Activated CD8-positive, alpha-beta T cell treated with anti-CD3 and anti-CD28 coated beads, Interleukin-2, amount 10 ng/mL, durations not matched to agents 7 days and 5 days (primary cell): ENCODE measurements at regions of chr2 and their contacts with region 1.

Region 1: GRCh38 chr2:109031476-109032228 is 42.6 kb upstream of the EDAR start:
- DNase-seq: peak; percentile 84
- ATAC-seq: peak; percentile 82
- H3K4me3 Mint-ChIP-seq: peak overlapping the region; percentile 83
- H3K27ac Mint-ChIP-seq: peak overlapping the region; percentile 95
- H3K4me1 Mint-ChIP-seq: peaks cover 29% of the 10 kb centered on the region
- H3K27me3 Mint-ChIP-seq: no peaks in the 10 kb centered on the region

Region 2: GRCh38 chr2:108858894-108859293 is 172.8 kb before region 1 on chr2:
- CTCF ChIA-PET with region 1: no interaction called
- POLR2A ChIA-PET with region 1: no interaction called
- DNase-seq: no peak
- ATAC-seq: no peak
- H3K4me3 Mint-ChIP-seq: no peak overlapping the region
- H3K27ac Mint-ChIP-seq: no peak overlapping the region
- H3K4me1 Mint-ChIP-seq: no peaks in the 10 kb centered on the region
- H3K27me3 Mint-ChIP-seq: no peaks in the 10 kb centered on the region

Region 3: DNA sequence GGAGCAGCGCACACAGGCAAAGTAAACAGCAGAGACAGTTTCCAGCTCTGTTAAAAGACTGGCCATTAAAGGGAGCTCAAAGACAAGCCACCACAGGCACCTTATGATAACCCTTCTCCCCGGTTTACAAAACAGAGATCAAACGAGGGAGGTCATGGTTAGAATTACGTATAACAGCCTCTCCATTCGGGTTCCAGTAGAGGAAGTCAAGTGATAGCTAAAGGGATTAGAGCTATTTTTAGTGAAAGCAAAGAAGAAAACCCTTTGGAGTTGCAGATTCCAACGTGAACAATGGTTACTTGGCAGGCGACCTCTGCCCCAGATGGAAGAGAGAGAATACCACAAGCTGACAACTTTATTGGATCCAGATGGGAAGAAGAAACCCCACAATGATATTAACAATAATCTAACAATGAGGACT is 11.4 kb before region 1 on chr2:
- CTCF ChIA-PET with region 1: interaction called, 12 read pairs
- POLR2A ChIA-PET with region 1: interaction called, 9 read pairs
- DNase-seq: no peak
- ATAC-seq: no peak
- H3K4me3 Mint-ChIP-seq: no peak overlapping the region
- H3K27ac Mint-ChIP-seq: no peak overlapping the region
- H3K4me1 Mint-ChIP-seq: peaks cover 6% of the 10 kb centered on the region
- H3K27me3 Mint-ChIP-seq: peaks cover 5% of the 10 kb centered on the region

Region 4: DNA sequence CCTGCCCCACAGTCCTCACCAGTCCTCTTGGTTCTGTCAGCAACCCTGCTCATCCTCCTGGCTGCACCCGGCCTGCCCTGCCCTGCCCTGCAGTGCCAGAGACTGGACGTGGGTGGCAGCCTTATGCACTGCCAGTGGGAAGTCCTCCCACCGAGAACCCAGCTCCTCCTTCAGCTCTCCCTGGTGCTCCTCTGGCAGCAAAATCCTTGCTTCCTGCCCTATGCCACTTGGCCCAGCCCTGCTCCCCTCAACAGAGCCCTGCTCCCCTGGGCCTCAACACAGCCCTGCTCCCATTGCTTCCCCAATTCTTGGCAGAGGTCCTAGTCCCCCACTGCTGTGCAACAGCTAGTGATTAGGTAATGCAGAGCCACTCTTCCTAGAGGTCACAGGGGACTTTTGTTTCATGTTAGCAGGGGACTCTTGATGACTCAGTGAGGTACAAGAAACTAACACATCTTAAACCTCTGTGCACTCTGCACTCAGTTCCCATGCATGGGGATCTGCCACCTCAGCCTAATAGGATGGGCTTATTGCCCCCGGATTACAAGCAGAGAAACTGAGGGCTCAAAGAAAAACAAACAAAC is 15.4 kb after region 1 on chr2:
- CTCF ChIA-PET with region 1: interaction called, 12 read pairs
- POLR2A ChIA-PET with region 1: interaction called, 6 read pairs
- DNase-seq: no peak
- ATAC-seq: no peak
- H3K4me3 Mint-ChIP-seq: no peak overlapping the region
- H3K27ac Mint-ChIP-seq: peak overlapping the region; percentile 39
- H3K4me1 Mint-ChIP-seq: peaks cover 10% of the 10 kb centered on the region
- H3K27me3 Mint-ChIP-seq: peaks cover 2% of the 10 kb centered on the region

Region 5: GRCh38 chr2:109594246-109594885 is 562.7 kb after region 1 on chr2:
- CTCF ChIA-PET with region 1: no interaction called
- POLR2A ChIA-PET with region 1: no interaction called
- DNase-seq: no peak
- ATAC-seq: no peak
- H3K4me3 Mint-ChIP-seq: no peak overlapping the region
- H3K27ac Mint-ChIP-seq: no peak overlapping the region
- H3K4me1 Mint-ChIP-seq: no peaks in the 10 kb centered on the region
- H3K27me3 Mint-ChIP-seq: no peaks in the 10 kb centered on the region